ENCODE measurements at regions of chr7 and their contacts with region 1.

Region 1: DNA sequence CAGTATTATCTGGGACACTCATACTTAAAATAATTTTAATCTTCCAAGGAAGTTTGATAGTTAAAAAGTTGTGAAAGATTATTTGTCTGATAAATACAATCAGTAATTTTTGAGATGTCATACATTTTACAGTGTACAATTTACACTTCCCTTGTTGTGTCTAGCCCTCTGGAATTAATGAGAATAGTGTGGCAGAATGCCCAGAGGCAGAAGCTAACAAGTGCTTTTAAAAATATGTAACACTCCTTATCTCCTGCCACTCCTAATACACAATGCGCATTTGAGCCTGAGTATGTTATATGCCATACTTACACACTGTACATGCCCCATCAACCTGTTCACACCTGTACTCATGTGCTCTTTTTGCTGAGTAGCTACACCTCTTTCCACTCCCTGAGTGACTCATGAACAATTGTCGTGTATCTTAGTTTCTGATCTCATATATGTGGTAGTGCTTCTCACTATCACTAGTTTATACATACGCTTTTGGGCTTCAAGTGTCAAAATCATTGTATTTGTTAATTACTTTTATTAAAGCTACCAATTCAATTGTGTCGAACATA is 106.9 kb upstream of the GNAI1 start:
- DNase-seq: peak; percentile 25
- H3K4me3 ChIP-seq: no peak overlapping the region
- H3K27ac ChIP-seq: no peak overlapping the region
- H3K4me1 ChIP-seq: no peaks in the 10 kb centered on the region
- H3K27me3 ChIP-seq: no peaks in the 10 kb centered on the region
- CTCF ChIP-seq: no peak

Region 2: DNA sequence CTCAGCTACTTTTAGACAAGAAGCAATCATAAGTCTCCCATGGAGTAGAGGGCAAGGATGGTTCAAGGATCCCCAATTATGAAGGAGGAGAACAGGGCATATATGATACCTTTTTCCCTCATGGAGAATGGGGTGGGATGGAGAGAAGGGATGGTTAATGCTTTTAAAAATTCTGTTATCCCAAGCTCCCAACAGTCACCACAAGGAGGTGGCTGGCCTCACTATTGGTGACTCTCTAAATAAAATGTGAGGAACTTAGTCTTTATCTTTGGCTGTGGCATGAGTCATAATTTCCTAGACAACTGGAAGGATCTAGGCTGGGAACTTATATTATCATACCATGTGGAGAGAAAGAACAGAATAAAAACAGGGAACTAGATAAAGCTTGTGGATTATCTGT is 1932.1 kb before region 1 on chr7:
- CTCF ChIA-PET with region 1: no interaction called
- dilution Hi-C with region 1: no loop called
- in situ Hi-C with region 1: no loop called
- intact Hi-C with region 1: no loop called
- DNase-seq: no peak
- H3K4me3 ChIP-seq: no peak overlapping the region
- H3K27ac ChIP-seq: no peak overlapping the region
- H3K4me1 ChIP-seq: no peaks in the 10 kb centered on the region
- H3K27me3 ChIP-seq: peaks cover 3% of the 10 kb centered on the region
- CTCF ChIP-seq: no peak

Region 3: DNA sequence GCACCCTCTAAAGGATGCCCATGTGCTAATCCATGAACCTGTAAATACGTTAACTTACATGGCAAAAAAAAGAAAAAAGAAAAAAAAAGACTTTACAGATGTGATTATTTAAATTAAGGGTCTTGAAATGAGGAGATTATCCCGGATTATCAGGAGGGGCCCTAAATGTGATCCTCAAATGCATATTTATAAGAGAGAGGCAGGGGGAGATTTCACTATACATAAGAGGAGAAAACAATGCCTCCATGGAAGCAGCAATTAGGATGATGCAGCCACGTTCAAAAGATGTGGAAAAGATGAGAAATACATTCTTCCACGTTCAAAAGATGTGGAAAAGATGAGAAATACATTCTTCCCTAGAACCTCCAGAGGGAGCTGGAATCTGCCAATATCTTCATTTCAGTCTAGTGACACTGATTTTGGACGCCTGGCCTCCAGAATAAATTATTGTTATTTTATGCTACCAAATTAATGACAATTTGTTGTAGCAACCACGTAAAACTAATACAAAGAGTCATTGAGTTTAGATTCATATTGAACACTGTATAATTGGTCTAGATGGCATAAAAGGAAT is 221.4 kb before region 1 on chr7:
- CTCF ChIA-PET with region 1: no interaction called
- dilution Hi-C with region 1: no loop called
- in situ Hi-C with region 1: loop called (anchors 10 to 25 kb)
- intact Hi-C with region 1: no loop called
- DNase-seq: peak; percentile 8
- H3K4me3 ChIP-seq: no peak overlapping the region
- H3K27ac ChIP-seq: no peak overlapping the region
- H3K4me1 ChIP-seq: no peaks in the 10 kb centered on the region
- H3K27me3 ChIP-seq: peaks cover 2% of the 10 kb centered on the region
- CTCF ChIP-seq: peak; percentile 29 to 47

Region 4: GRCh38 chr7:80244206-80244916 is 216.7 kb after region 1 on chr7:
- CTCF ChIA-PET with region 1: no interaction called
- dilution Hi-C with region 1: no loop called
- in situ Hi-C with region 1: no loop called
- intact Hi-C with region 1: no loop called
- DNase-seq: no peak
- H3K4me3 ChIP-seq: no peak overlapping the region
- H3K27ac ChIP-seq: no peak overlapping the region
- H3K4me1 ChIP-seq: no peaks in the 10 kb centered on the region
- H3K27me3 ChIP-seq: no peaks in the 10 kb centered on the region
- CTCF ChIP-seq: no peak

Measured in mammary epithelial cell (primary cell).